ENCODE measurements at regions of chr5 and their contacts with region 1.

Region 1: GRCh38 chr5:139482050-139482889 is at the start of gene STING1:
- DNase-seq: peak; percentile 37 to 82 (median 64)
- ATAC-seq: peak; percentile 90 to 92
- H3K4me3 Mint-ChIP-seq: peak within 1 kb of the TSS; percentile 85 to 93 (median 89)
- H3K27ac Mint-ChIP-seq: peak within 1 kb of the TSS; percentile 79 to 97 (median 95)
- H3K4me1 Mint-ChIP-seq: peaks cover 18 to 49% (median 42%) of the 10 kb centered on the region in 4 donors
- H3K27me3 Mint-ChIP-seq: no peaks in the 10 kb centered on the region
- polyA plus RNA-seq, gene STING1: 40.6 to 87.3 (median 45.1) TPM

Region 2: DNA sequence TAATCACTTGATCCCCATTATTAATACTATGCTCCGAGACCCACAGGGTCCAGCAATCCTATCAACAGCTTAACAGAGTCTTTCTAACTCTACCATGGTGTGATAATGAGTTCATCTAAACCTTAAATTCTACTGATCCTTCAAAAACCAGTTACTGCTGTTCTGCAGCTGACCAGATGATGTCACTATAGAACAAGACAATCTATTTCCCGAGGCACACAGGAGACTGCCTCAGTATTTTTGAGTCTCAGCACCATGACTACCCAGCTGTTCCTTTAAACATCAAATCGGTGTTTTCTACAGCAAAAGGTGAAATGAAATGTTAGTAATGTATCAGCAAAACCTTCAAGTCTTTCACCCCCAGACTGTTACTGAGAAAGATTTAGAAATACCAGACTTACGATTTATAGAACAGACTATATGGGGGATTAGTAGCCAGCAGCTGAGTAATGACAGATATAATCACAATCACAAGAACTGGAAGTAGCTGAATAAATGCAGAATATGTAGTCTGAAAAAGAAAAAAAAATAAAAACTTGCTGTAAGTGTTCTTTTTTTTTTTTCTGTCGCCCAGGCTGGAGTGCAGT is 59.9 kb before region 1 on chr5:
- POLR2A ChIA-PET with region 1: interaction called, 14 read pairs
- DNase-seq: peak in 9 of 10 donors; percentile 41 to 84 (median 67)
- ATAC-seq: peak; percentile 98 to 99
- H3K4me3 Mint-ChIP-seq: no peak overlapping the region
- H3K27ac Mint-ChIP-seq: peak overlapping the region in 5 of 10 donors; percentile 10 to 81 (median 70)
- H3K4me1 Mint-ChIP-seq: peaks cover 4 to 7% (median 5%) of the 10 kb centered on the region in 4 donors
- H3K27me3 Mint-ChIP-seq: no peaks in the 10 kb centered on the region

Region 3: DNA sequence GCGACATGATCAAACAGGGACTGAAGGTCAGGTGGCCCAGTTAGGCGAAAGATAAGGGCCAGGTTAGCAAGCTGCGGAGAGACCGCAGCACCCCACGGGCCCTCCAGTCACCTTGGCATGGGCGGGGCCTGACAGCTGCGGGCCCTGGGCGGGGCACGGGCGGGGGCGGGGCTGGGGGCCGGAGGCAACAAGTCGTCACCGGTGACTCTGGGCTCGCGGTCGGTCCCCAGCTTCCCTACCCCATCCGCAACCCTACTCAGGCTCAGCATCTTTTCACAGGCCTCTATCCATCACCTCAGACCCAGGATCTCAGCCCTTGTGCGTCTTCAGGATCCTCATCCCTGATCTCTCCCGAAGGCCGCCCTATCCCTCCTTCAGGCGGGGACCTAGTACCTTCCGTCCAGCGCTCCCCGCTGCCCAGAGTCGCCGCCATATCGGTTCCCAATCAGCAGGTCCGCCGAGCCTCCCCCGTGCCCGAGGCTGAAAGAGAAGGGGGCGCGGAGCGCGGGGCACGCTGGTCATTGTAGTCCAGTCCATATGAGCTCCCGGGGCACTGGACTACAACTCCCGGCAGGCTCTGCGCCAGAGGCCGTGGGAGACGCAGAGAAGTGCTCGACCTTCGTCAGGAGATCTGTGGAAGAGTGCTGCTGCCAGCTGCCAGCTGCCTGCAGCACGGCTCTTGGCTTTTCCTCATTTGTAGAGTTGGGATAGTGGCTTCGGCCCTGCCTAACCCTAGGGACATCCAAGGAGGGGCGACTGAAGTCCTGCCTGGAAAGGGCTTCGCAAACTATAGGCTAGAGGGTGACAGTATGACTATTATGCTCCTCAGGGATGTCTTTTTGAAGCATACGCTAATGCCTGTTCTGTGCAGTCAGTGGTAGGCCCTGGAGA is 43.0 kb before region 1 on chr5 and contains the start of gene DNAJC18:
- POLR2A ChIA-PET with region 1: interaction called, 30 read pairs
- DNase-seq: peak; percentile 81 to 93 (median 86)
- ATAC-seq: peak; percentile 93
- H3K4me3 Mint-ChIP-seq: peak within 1 kb of the TSS; percentile 93 to 100 (median 98)
- H3K27ac Mint-ChIP-seq: peak within 1 kb of the TSS; percentile 97 to 100 (median 99)
- H3K4me1 Mint-ChIP-seq: peaks cover 21 to 38% (median 34%) of the 10 kb centered on the region in 4 donors
- H3K27me3 Mint-ChIP-seq: peaks cover 0 to 2% (median 0%) of the 10 kb centered on the region in 5 donors
- polyA plus RNA-seq, gene DNAJC18: 2.8 to 9.1 (median 5.1) TPM

Region 4: GRCh38 chr5:139458580-139459406 is 23.5 kb before region 1 on chr5:
- POLR2A ChIA-PET with region 1: interaction called, 25 read pairs
- DNase-seq: peak; percentile 49 to 90 (median 76)
- ATAC-seq: peak; percentile 98 to 99
- H3K4me3 Mint-ChIP-seq: peak overlapping the region; percentile 16 to 70 (median 64)
- H3K27ac Mint-ChIP-seq: peak overlapping the region; percentile 90 to 97 (median 94)
- H3K4me1 Mint-ChIP-seq: peaks cover 34 to 75% (median 57%) of the 10 kb centered on the region in 4 donors
- H3K27me3 Mint-ChIP-seq: no peaks in the 10 kb centered on the region

Region 5: DNA sequence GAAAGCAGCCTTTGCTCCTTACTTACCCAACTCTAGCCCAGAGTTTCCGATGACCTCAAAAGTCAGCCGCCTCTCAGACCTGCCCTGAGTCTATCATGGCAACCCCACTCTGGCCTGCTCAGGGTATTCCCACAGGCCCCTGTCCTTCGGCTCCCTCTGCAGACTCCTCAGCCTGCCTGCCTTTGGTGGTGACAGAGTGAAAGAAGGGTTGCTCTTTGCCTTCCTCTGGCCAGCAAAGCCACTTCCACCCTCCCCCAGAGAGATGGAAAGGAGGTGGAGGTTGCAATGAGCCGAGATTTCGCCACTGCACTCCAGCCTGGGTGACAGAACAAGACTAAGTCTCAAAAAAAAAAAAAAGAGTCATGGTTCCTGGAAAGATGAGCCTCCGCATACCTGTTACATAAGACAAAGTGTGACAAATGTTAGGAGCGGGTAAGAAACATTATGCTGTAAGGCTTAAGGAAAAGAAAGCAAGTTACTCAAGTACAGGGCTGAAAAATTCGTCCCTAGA is 13.8 kb before region 1 on chr5:
- POLR2A ChIA-PET with region 1: interaction called, 50 read pairs
- DNase-seq: no peak
- ATAC-seq: no peak
- H3K4me3 Mint-ChIP-seq: peak overlapping the region in 6 of 10 donors; percentile 33 to 85 (median 59)
- H3K27ac Mint-ChIP-seq: peak overlapping the region in 8 of 10 donors; percentile 36 to 96 (median 74)
- H3K4me1 Mint-ChIP-seq: peaks cover 25 to 51% (median 49%) of the 10 kb centered on the region in 4 donors
- H3K27me3 Mint-ChIP-seq: no peaks in the 10 kb centered on the region

Region 6: GRCh38 chr5:139513852-139514485 is 31.7 kb after region 1 on chr5:
- POLR2A ChIA-PET with region 1: interaction called, 19 read pairs
- DNase-seq: no peak
- ATAC-seq: no peak
- H3K4me3 Mint-ChIP-seq: peak overlapping the region in 1 of 10 donors; percentile 52
- H3K27ac Mint-ChIP-seq: peak overlapping the region in 5 of 10 donors; percentile 0 to 81 (median 76)
- H3K4me1 Mint-ChIP-seq: peaks cover 31 to 60% (median 51%) of the 10 kb centered on the region in 4 donors
- H3K27me3 Mint-ChIP-seq: no peaks in the 10 kb centered on the region

Measured in naive thymus-derived CD8-positive, alpha-beta T cell (primary cell).